ENCODE measurements at regions of chr19 and their contacts with region 1.

Region 1: DNA sequence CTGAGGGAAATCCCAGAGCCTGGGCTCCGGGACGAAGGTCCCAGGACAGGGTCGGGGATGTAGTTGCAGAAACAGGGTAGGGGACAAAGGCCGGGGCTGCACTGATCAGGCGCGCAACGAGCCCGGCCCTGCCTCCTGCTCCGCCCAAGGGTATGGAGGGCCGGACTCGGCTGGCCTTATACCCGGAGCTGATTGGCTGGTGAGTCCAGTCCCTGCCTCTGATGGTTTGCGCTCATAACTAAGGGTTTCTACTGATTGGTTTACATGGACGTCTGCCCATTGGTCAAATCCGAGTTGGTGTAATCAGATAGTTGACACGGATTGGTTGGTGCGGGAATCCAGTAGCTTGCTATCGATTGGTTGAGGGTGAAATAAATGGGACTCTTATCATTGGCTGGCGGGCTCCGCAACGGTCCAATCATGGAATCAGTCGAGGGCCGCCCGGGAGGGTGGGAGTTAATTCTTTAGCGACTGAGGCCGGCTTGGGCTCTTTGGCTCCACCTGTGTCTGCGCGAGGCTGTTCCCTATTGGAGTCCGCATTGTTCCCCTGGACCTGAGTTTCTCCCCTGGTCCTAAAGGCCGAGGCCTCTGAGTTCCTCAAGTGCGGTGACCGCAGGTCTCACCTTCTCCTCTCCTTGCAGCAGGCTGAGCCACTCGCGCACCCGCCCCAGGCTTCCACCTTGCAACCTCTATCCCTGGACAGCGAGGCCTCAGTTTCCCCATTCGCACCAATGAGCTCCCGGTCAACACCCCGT is 570 bp upstream of the MPND start:
- DNase-seq: peak; percentile 92

Region 2: DNA sequence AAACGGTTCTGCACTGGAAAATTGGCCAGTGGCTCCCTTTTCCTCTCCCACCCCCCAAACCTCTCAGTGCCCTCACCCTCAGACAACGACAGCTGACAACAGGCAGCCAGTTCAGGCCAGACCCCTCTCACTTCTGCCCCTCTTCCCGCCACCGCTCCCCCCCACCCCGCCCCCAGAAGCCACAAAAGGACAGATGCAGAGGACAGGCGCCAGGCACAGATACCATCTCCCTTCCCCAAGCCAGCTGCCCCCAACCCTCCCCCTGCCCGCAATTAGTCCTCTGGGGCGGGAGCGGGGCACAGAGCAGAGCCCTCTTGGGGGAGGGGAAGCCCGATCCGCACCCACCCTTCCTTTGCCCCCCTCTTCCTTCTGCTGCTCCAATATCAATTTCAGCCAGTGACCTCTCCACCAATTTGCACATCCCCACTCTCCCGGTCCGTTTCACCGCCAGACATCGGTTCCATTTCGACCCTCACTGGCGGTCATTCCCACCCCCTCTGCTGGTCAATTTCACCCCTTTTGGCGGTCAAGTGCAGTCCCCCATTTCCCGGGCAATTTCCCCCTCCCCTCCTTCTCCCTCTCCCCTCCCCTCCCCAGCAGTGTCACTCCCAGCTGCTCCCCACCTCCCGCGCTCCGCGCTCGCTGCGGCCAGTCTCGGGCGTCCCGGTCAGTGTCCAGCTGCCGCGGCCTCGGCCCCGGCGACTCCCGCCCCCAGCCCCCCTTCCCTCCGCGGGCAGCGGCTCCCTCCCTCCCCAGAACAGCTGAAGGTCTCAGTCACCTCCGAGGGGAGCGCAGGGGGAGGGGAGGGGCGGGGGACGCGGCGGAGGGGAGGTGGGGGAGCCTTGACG is 64.1 kb before region 1 on chr19 and contains the start of gene SHD:
- CTCF ChIA-PET with region 1: no interaction called
- POLR2A ChIA-PET with region 1: interaction called, 14 read pairs
- DNase-seq: no peak

Region 3: DNA sequence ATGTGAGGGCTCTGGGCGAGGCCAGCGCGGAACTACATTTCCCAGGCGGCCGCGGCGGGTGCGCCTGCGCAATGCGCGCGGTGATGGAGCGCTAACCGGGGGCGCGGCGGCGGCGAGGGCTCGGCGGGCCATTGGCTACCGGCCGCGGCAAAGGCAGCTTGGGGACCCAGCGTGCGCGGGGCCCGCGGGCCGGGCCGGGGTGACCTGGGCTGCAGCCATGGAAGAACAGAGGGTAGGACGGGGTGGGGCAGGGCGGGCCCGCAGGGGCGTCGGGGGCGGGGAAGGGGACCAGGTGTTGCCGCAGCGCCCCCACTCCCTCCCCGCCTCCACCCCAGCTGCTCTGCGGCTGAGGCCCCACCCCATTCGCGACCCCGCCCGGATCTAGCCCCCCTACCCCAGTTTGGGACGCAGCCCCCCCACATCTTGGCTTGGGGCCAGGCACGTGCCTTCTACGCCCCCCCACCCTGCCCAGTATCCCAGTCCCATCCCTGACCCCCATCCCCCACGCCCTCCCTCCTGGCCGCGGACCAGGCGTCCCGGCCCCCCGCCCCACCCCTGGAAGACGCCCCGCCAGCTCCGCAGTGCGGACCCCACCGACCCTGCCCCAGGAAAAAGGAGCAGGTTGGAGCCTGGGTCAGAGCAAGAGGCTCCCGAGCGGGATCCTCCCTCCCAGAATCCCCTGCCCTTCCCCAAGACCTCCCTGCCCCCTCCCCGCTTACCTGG is 38.1 kb before region 1 on chr19 and contains the start of gene FSD1:
- CTCF ChIA-PET with region 1: no interaction called
- POLR2A ChIA-PET with region 1: interaction called, 16 read pairs
- DNase-seq: peak; percentile 98

Region 4: GRCh38 chr19:4328243-4328990 is 14.4 kb before region 1 on chr19:
- CTCF ChIA-PET with region 1: no interaction called
- POLR2A ChIA-PET with region 1: interaction called, 34 read pairs
- DNase-seq: peak; percentile 92

Region 5: GRCh38 chr19:4393947-4394590 is 51.3 kb after region 1 on chr19:
- CTCF ChIA-PET with region 1: no interaction called
- POLR2A ChIA-PET with region 1: interaction called, 12 read pairs
- DNase-seq: no peak